Activated CD8-positive, alpha-beta T cell treated with anti-CD3 and anti-CD28 coated beads, Interleukin-2, amount 10 ng/mL, durations not matched to agents 7 days and 5 days (primary cell): ENCODE measurements at regions of chr12 and their contacts with region 1.

Region 1: DNA sequence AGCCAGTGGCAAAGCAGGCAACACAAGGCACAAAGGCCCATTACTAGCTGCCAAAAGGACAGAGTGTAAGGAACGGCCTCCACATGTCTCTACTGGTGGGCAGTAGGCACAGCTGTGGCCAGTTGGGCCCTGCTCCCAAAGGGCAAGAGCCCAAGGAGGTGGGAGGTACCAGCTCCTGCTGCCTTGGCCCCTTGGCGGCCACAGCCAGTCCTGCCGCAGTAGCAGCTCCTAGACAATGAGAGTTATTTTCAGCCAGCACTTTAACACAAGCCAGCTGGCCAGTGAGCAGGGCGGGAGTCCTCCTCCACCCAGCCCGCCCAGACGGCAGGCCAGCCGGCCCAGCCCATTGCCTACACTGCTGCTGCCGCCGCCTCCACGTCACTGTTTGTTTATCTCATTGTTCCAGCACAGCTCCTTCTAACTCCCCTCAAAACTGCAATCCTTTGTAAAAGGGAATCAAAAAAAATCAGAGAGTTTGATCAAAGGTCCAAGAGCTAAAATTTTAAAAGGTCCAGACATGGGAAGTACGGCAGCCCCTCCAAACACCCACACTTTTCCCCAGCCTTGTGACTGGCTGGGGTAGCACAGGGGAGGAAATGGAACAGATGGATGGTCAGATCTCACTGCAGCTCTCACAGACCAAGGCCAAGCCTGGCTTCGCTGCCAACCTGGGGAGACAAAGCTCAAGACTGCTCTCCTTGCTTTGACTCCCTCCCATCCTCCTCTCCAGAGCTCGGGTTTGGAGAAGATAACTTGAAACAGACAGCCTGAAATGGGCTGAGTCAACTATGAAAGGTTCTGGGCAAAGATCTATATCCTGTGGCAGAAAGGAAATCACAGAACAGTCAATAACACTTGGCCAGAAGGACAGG is 33.5 kb downstream of the FMNL3 start:
- DNase-seq: no peak
- ATAC-seq: no peak
- H3K4me3 Mint-ChIP-seq: no peak overlapping the region
- H3K27ac Mint-ChIP-seq: peak overlapping the region; percentile 69
- H3K4me1 Mint-ChIP-seq: peaks cover 76% of the 10 kb centered on the region
- H3K27me3 Mint-ChIP-seq: no peaks in the 10 kb centered on the region

Region 2: DNA sequence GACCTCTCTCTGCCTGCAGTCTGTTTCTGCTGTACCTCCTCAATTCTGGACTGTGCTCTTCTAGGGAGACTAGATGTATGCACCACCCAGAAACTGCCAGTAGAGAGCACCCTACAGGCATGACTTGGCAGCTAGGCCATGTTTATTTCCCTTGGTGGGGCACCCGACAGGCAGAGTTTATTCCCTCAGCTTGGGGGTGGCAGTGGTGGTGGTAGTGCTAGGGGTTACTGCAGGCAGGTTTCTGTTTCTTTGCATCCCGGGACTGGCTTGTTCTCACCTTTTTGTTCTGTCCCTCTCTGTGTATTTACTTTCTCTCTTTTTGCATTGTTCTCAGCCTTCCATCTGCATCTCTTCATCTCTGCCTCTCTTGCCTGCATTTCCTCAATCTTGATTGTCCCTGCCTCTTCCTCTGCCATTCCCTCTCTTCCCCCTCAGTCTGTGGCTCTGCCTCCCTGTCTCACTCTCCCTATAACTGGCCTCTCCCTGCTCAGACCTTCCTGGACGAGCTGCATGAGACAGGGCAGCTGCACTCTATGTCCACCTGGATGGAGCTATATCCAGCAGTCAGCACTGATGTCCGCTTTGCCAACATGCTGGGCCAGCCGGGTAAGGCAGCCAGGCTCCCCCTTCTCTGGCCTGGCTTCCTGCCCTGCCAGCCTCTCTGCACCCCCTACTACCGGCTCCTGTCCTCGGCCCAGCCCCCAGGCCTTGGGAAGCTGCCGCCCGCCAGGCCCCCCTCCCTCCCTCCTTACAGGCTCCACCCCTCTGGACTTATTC is 36.5 kb before region 1 on chr12:
- CTCF ChIA-PET with region 1: interaction called, 10 read pairs
- POLR2A ChIA-PET with region 1: no interaction called
- DNase-seq: peak; percentile 79
- ATAC-seq: peak; percentile 89
- H3K4me3 Mint-ChIP-seq: no peak overlapping the region
- H3K27ac Mint-ChIP-seq: peak overlapping the region; percentile 28
- H3K4me1 Mint-ChIP-seq: peaks cover 31% of the 10 kb centered on the region
- H3K27me3 Mint-ChIP-seq: no peaks in the 10 kb centered on the region

Region 3: GRCh38 chr12:49644620-49644994 is 29.1 kb before region 1 on chr12:
- CTCF ChIA-PET with region 1: interaction called, 28 read pairs
- POLR2A ChIA-PET with region 1: no interaction called
- DNase-seq: peak; percentile 89
- ATAC-seq: peak; percentile 96
- H3K4me3 Mint-ChIP-seq: no peak overlapping the region
- H3K27ac Mint-ChIP-seq: peak overlapping the region; percentile 87
- H3K4me1 Mint-ChIP-seq: peaks cover 41% of the 10 kb centered on the region
- H3K27me3 Mint-ChIP-seq: no peaks in the 10 kb centered on the region

Region 4: GRCh38 chr12:49662998-49663843 is 10.5 kb before region 1 on chr12:
- CTCF ChIA-PET with region 1: interaction called, 29 read pairs
- POLR2A ChIA-PET with region 1: interaction called, 18 read pairs
- DNase-seq: peak; percentile 90
- ATAC-seq: peak; percentile 98
- H3K4me3 Mint-ChIP-seq: peak overlapping the region; percentile 74
- H3K27ac Mint-ChIP-seq: peak overlapping the region; percentile 97
- H3K4me1 Mint-ChIP-seq: peaks cover 73% of the 10 kb centered on the region
- H3K27me3 Mint-ChIP-seq: no peaks in the 10 kb centered on the region

Region 5: GRCh38 chr12:49687941-49688340 is 14.3 kb after region 1 on chr12:
- CTCF ChIA-PET with region 1: interaction called, 45 read pairs
- POLR2A ChIA-PET with region 1: interaction called, 4 read pairs
- DNase-seq: no peak
- ATAC-seq: no peak
- H3K4me3 Mint-ChIP-seq: no peak overlapping the region
- H3K27ac Mint-ChIP-seq: no peak overlapping the region
- H3K4me1 Mint-ChIP-seq: peaks cover 44% of the 10 kb centered on the region
- H3K27me3 Mint-ChIP-seq: no peaks in the 10 kb centered on the region

Region 6: GRCh38 chr12:49707128-49707811 is 33.6 kb after region 1 on chr12 and contains the start of gene FMNL3:
- CTCF ChIA-PET with region 1: interaction called, 100 read pairs
- POLR2A ChIA-PET with region 1: interaction called, 16 read pairs
- DNase-seq: peak; percentile 98
- ATAC-seq: peak; percentile 96
- H3K4me3 Mint-ChIP-seq: peak within 1 kb of the TSS; percentile 90
- H3K27ac Mint-ChIP-seq: peak within 1 kb of the TSS; percentile 83
- H3K4me1 Mint-ChIP-seq: peaks cover 42% of the 10 kb centered on the region
- H3K27me3 Mint-ChIP-seq: peaks cover 26% of the 10 kb centered on the region
- total RNA-seq, gene FMNL3: 53.5 to 54.5 TPM

Region 7: DNA sequence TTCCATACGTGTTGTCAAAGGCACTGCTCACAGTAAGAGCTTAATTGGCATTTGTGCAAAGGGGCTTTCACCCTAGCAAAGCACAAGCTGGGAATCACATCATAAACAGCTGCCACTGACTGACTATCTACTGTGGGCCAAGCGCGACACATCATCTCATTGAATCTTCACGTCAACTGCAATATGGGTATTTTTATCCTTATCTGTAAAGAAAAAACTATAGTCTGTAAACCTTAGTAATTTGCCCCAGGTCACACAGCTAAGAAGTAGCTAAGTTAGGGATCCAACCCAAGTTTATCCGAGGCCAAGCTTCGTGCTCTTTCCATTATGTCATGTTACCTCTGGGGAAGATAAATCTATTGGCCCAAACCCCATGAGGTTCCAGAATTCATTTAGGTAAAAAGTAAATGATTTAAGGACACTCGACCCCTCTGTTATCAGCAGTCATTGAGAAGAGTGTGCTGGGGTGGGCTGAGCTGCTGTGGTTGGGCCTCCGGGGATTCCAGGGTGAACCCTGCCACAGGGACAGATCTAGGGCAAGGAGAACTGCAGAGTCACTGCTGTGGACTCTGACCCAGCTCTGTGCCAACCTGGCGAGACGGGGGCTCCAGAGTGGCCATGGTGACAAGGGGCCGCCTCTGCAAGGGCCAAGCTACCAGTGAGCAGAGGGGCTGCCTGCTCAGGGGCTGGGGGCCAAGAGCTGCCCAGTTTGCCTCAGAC is 126.9 kb after region 1 on chr12:
- CTCF ChIA-PET with region 1: no interaction called
- POLR2A ChIA-PET with region 1: no interaction called
- DNase-seq: no peak
- ATAC-seq: no peak
- H3K4me3 Mint-ChIP-seq: no peak overlapping the region
- H3K27ac Mint-ChIP-seq: no peak overlapping the region
- H3K4me1 Mint-ChIP-seq: no peaks in the 10 kb centered on the region
- H3K27me3 Mint-ChIP-seq: no peaks in the 10 kb centered on the region